A673 (cell line): ENCODE measurements at regions of chr1 and their contacts with region 1.

Region 1: GRCh38 chr1:93437976-93438605 is 9.8 kb upstream of the FNBP1L start:
- DNase-seq: peak; percentile 69
- H3K4me3 ChIP-seq: no peak overlapping the region
- H3K27ac ChIP-seq: no peak overlapping the region
- H3K4me1 ChIP-seq: no peaks in the 10 kb centered on the region
- H3K27me3 ChIP-seq: no peaks in the 10 kb centered on the region
- CTCF ChIP-seq: peak; percentile 73

Region 2: GRCh38 chr1:93148001-93148400 is 290.1 kb before region 1 on chr1:
- CTCF ChIA-PET with region 1: no interaction called
- POLR2A ChIA-PET with region 1: no interaction called
- intact Hi-C with region 1: no loop called
- DNase-seq: no peak
- H3K4me3 ChIP-seq: no peak overlapping the region
- H3K27ac ChIP-seq: no peak overlapping the region
- H3K4me1 ChIP-seq: no peaks in the 10 kb centered on the region
- H3K27me3 ChIP-seq: no peaks in the 10 kb centered on the region
- CTCF ChIP-seq: no peak

Region 3: DNA sequence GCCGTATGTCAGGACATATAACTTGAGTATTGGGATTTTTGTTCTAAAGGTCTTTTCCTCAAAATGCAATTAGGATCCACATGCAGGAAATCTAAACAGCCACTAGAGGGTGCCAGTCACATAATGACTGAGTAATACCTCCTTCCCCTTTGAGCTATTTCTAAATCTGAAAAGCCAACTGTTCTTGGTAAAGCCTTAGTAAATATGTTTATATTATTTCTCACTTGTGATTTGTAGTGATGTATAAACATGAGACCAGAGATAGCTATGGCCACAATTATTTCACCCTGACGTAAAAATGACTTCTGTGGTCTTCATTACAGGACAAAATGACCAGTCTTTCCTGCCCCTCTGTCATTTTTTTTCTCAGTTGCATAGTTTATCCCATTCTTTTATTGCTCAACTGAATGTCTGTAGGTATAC is 133.4 kb before region 1 on chr1:
- CTCF ChIA-PET with region 1: interaction called, 5 read pairs
- POLR2A ChIA-PET with region 1: no interaction called
- intact Hi-C with region 1: loop called (anchors 5 kb)
- DNase-seq: peak; percentile 78
- H3K4me3 ChIP-seq: no peak overlapping the region
- H3K27ac ChIP-seq: no peak overlapping the region
- H3K4me1 ChIP-seq: no peaks in the 10 kb centered on the region
- H3K27me3 ChIP-seq: no peaks in the 10 kb centered on the region
- CTCF ChIP-seq: peak; percentile 94

Region 4: GRCh38 chr1:93619507-93620171 is 181.5 kb after region 1 on chr1:
- CTCF ChIA-PET with region 1: no interaction called
- POLR2A ChIA-PET with region 1: no interaction called
- intact Hi-C with region 1: loop called (anchors 2 kb)
- DNase-seq: peak; percentile 50
- H3K4me3 ChIP-seq: no peak overlapping the region
- H3K27ac ChIP-seq: no peak overlapping the region
- H3K4me1 ChIP-seq: peaks cover 8% of the 10 kb centered on the region
- H3K27me3 ChIP-seq: no peaks in the 10 kb centered on the region
- CTCF ChIP-seq: peak; percentile 59

Region 5: GRCh38 chr1:93734999-93735398 is 296.9 kb after region 1 on chr1:
- CTCF ChIA-PET with region 1: no interaction called
- POLR2A ChIA-PET with region 1: no interaction called
- intact Hi-C with region 1: no loop called
- DNase-seq: no peak
- H3K4me3 ChIP-seq: no peak overlapping the region
- H3K27ac ChIP-seq: no peak overlapping the region
- H3K4me1 ChIP-seq: no peaks in the 10 kb centered on the region
- H3K27me3 ChIP-seq: no peaks in the 10 kb centered on the region
- CTCF ChIP-seq: no peak

Region 6: GRCh38 chr1:93814059-93814794 is 376.1 kb after region 1 on chr1:
- CTCF ChIA-PET with region 1: no interaction called
- POLR2A ChIA-PET with region 1: no interaction called
- intact Hi-C with region 1: loop called (anchors 10 kb)
- DNase-seq: peak; percentile 75
- H3K4me3 ChIP-seq: no peak overlapping the region
- H3K27ac ChIP-seq: no peak overlapping the region
- H3K4me1 ChIP-seq: peaks cover 18% of the 10 kb centered on the region
- H3K27me3 ChIP-seq: no peaks in the 10 kb centered on the region
- CTCF ChIP-seq: peak; percentile 85

Region 7: DNA sequence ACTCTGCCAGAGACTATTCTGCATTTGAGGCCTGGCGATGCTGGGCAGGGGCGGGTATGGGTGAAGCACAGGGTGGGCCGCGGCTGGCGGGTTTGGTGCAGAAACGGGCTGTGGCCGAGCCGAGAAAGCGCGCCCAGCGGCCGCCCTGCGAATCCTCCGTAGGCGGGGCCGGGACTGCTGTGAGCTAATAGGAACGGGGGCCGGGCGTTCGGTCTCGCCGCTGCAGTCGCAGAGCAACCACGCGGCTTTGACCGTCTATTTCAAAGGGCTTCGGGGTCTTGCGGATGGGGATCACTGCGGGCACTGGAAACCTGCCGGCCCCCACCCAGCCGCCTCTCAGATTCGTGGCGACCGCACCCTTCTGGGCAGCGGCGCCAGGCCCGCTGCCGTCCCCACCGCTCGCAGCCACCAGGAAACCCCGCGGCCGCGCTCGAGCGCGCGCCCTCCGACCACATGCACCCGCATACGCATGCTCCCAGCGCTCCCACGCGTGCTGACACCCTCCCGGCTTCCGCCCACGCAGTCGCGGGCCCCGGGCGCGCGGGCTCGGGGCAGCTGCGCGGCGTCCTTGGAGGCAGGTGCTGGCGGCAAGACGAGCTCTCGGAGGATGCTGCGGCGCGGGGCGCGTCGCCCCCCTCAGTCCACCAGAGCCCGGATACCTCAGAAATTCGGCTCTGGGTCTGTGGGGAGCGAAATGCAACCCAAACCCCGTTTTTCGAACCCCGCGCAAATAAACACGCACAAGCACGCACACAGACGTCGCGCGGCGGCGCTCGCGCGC is 408.3 kb after region 1 on chr1:
- CTCF ChIA-PET with region 1: interaction called, 5 read pairs
- POLR2A ChIA-PET with region 1: no interaction called
- intact Hi-C with region 1: loop called (anchors 2 kb)
- DNase-seq: peak; percentile 93
- H3K4me3 ChIP-seq: peak overlapping the region; percentile 96
- H3K27ac ChIP-seq: peak overlapping the region; percentile 91
- H3K4me1 ChIP-seq: peaks cover 6% of the 10 kb centered on the region
- H3K27me3 ChIP-seq: no peaks in the 10 kb centered on the region
- CTCF ChIP-seq: peak; percentile 39

Region 8: GRCh38 chr1:94039514-94039870 is 601.4 kb after region 1 on chr1:
- CTCF ChIA-PET with region 1: no interaction called
- POLR2A ChIA-PET with region 1: no interaction called
- intact Hi-C with region 1: loop called (anchors 10 kb)
- DNase-seq: peak; percentile 84
- H3K4me3 ChIP-seq: no peak overlapping the region
- H3K27ac ChIP-seq: no peak overlapping the region
- H3K4me1 ChIP-seq: no peaks in the 10 kb centered on the region
- H3K27me3 ChIP-seq: no peaks in the 10 kb centered on the region
- CTCF ChIP-seq: peak; percentile 97